GM12878 (cell line): ENCODE measurements at regions of chr20 and their contacts with region 1.

Region 1: DNA sequence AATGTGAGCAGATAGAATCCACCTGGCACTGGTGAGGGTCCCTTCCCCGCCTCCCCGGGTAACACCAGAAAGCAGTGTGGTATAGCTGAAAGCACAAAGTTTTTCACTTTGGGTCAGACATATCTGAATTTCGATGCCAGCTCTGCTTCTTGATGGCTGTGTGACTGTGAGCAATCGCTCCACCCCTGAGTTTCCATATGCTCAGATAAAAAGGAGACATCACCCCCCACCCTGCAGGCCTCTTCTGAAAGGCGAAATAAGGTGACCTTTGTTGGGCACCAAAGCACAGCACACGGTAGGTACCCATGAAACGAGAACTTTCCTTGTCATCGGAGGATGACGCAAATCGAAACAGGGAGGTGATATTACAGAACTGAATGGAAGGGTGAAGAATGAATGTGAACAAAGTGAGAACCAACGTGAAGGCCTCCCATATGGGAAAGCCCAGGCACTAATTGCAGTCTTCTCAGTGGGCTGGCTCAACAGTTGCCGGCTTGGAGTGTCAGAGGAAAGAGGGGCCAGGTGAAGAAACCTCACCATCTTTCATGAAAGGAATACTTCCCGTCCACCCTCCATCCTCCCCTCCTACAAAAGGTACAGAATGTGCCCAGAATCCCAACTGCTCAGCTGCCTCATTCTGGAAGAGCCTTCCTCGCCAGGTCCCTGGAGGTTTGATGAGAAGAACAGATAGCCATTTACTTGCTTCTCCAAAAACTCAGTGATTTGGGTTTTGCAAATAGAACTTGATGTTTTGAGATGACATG is 61.8 kb downstream of the NFATC2 start:
- DNase-seq: peak; percentile 84
- ATAC-seq: peak; percentile 92
- H3K4me3 ChIP-seq: peak overlapping the region; percentile 59; the same call in 1 of the 2 replicates
- H3K27ac ChIP-seq: peak overlapping the region; percentile 86
- H3K4me1 ChIP-seq: peaks cover 40% of the 10 kb centered on the region
- H3K27me3 ChIP-seq: no peaks in the 10 kb centered on the region
- CTCF ChIP-seq: no peak
- EP300 ChIP-seq: peak; percentile 89 to 94; a peak in 3 of 4 replicates
- POLR2A ChIP-seq: no peak
- RAD21 ChIP-seq: no peak

Region 2: GRCh38 chr20:51404298-51405060 is 76.2 kb before region 1 on chr20:
- CTCF ChIA-PET with region 1: no interaction called
- POLR2A ChIA-PET with region 1: no interaction called
- RAD21 ChIA-PET with region 1: interaction called, 3 read pairs
- SMC1A ChIA-PET with region 1: interaction called, 3 read pairs
- in situ Hi-C with region 1: no loop called
- intact Hi-C with region 1: loop called (anchors 5 kb)
- DNase-seq: peak; percentile 80
- ATAC-seq: peak; percentile 88
- H3K4me3 ChIP-seq: no peak overlapping the region
- H3K27ac ChIP-seq: peak overlapping the region; percentile 73
- H3K4me1 ChIP-seq: peaks cover 61% of the 10 kb centered on the region
- H3K27me3 ChIP-seq: no peaks in the 10 kb centered on the region
- CTCF ChIP-seq: no peak
- EP300 ChIP-seq: peak; percentile 16 to 77; a peak in 2 of 4 replicates
- POLR2A ChIP-seq: peak; percentile 70
- RAD21 ChIP-seq: no peak

Region 3: DNA sequence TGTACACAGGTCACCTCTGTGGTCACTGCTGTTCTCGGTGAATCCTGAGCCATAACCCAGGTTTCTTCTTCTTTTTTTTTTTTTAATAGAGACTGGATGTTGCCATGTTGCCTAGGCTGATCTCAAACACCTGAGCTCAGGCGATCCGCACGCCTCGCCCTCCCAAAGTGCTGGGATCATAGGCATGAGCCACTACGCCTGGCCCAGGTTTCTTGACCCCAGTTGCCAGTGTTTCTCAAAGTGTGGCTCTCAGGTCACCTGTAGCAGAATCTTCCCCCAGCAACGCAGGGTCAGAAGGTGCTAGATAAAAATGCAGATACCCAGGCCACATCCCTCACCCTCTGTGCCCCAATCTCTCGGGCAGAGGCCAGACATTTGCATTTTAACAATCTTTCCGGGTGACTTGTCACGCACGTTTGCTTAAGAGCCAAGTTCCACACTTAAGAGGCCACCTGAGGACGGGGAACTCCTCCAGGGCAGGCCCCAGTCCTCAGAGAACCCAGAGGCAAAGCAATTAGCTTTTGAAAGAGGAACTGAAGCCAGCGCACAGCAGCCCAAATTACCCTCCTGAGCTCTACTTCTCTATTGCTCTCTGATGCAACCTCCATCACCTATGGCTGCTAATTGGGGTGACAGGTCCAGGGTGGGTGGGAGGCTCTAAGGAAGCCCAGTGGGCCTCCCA is 20.0 kb before region 1 on chr20:
- CTCF ChIA-PET with region 1: no interaction called
- POLR2A ChIA-PET with region 1: interaction called, 3 read pairs
- RAD21 ChIA-PET with region 1: interaction called, 8 read pairs
- SMC1A ChIA-PET with region 1: interaction called, 13 read pairs
- in situ Hi-C with region 1: no loop called
- intact Hi-C with region 1: loop called (anchors 2 kb)
- DNase-seq: peak; percentile 64
- ATAC-seq: peak; percentile 99
- H3K4me3 ChIP-seq: no peak overlapping the region
- H3K27ac ChIP-seq: peak overlapping the region; percentile 74
- H3K4me1 ChIP-seq: peaks cover 16% of the 10 kb centered on the region
- H3K27me3 ChIP-seq: no peaks in the 10 kb centered on the region
- CTCF ChIP-seq: no peak
- EP300 ChIP-seq: peak; percentile 89 to 90; a peak in 3 of 4 replicates
- POLR2A ChIP-seq: no peak
- RAD21 ChIP-seq: peak; percentile 7; the same call in 1 of the 2 replicates

Region 4: GRCh38 chr20:51500311-51500710 is 19.6 kb after region 1 on chr20:
- CTCF ChIA-PET with region 1: no interaction called
- POLR2A ChIA-PET with region 1: no interaction called
- RAD21 ChIA-PET with region 1: interaction called, 5 read pairs
- SMC1A ChIA-PET with region 1: interaction called, 5 read pairs
- in situ Hi-C with region 1: no loop called
- intact Hi-C with region 1: loop called (anchors 1 kb)
- DNase-seq: peak; percentile 37
- ATAC-seq: peak; percentile 89
- H3K4me3 ChIP-seq: no peak overlapping the region
- H3K27ac ChIP-seq: peak overlapping the region; percentile 34; the same call in 1 of the 2 replicates
- H3K4me1 ChIP-seq: peaks cover 51% of the 10 kb centered on the region
- H3K27me3 ChIP-seq: no peaks in the 10 kb centered on the region
- CTCF ChIP-seq: no peak
- EP300 ChIP-seq: no peak
- POLR2A ChIP-seq: no peak
- RAD21 ChIP-seq: no peak

Region 5: GRCh38 chr20:51541189-51542032 is 60.7 kb after region 1 on chr20:
- CTCF ChIA-PET with region 1: interaction called, 5 read pairs
- POLR2A ChIA-PET with region 1: interaction called, 4 read pairs
- RAD21 ChIA-PET with region 1: no interaction called
- SMC1A ChIA-PET with region 1: interaction called, 4 read pairs
- in situ Hi-C with region 1: no loop called
- intact Hi-C with region 1: loop called (anchors 2 kb)
- DNase-seq: no peak
- ATAC-seq: peak; percentile 77
- H3K4me3 ChIP-seq: peak overlapping the region; percentile 88
- H3K27ac ChIP-seq: peak overlapping the region; percentile 82
- H3K4me1 ChIP-seq: peaks cover 23% of the 10 kb centered on the region
- H3K27me3 ChIP-seq: no peaks in the 10 kb centered on the region; a peak in 2 of 4 replicates
- CTCF ChIP-seq: no peak
- EP300 ChIP-seq: peak in 1 of 2 experiments; percentile 66; a peak in 2 of 4 replicates
- POLR2A ChIP-seq: peak; percentile 44
- RAD21 ChIP-seq: no peak